Prostate gland (tissue), 2 donors: ENCODE measurements at regions of chr12 and their contacts with region 1.

Region 1: GRCh38 chr12:130761537-130762318 is 45.6 kb upstream of the RIMBP2 start:
- DNase-seq: peak; percentile 40
- H3K4me3 ChIP-seq: no peak overlapping the region
- H3K27ac ChIP-seq: no peak overlapping the region
- H3K4me1 ChIP-seq: no peaks in the 10 kb centered on the region
- H3K27me3 ChIP-seq: no peaks in the 10 kb centered on the region
- CTCF ChIP-seq: peak in 3 of 4 experiments; percentile 51 to 65 (median 58)
- POLR2A ChIP-seq: no peak

Region 2: DNA sequence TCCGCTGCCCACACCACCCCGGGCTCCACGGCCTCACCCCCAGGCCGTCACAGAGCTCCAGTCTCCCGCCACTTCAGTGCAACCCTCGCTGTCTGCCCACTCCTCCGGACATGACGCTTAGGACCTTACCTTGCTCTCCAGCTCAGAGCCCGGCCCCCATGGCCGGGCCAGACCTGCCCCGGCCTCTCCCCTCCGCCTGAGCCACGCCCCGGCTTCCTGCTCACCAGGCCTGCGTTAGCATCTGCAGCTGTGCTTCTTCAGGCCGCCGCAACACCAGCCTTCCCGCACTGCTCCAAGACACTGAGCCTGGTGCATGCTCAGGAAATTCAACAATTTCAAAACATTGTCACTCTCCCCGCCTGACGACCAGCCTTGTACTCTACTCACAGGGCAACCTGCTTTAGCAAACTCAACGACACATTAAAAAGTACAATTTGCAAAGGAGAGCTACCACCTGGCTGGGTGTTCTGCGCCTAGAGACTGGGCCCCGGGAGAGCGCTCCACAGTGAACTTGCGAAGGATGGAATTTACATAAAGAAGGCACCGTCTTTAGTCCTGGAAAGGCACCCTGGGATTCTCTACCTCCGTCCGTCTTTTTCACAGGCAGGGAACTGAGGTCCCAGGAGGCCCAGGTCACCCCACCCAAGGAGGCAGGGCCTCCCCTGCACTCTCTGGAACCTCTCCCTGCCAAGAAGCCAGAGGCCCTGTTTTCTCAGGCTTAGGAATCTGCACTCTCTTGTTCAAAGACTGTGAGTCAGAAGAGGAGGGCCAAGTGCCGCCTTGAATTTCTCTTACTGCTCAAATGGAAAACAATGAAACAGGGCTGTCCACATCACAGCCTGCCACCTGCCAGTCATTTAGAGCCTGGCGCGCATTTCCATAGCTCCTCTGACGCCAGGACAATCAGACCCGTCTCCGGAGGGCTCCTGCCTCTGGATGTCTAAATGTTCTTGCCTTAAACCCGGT is 26.0 kb after region 1 on chr12:
- intact Hi-C with region 1: no loop called
- DNase-seq: no peak
- H3K4me3 ChIP-seq: no peak overlapping the region
- H3K27ac ChIP-seq: no peak overlapping the region
- H3K4me1 ChIP-seq: no peaks in the 10 kb centered on the region
- H3K27me3 ChIP-seq: no peaks in the 10 kb centered on the region
- CTCF ChIP-seq: no peak
- POLR2A ChIP-seq: no peak

Region 3: DNA sequence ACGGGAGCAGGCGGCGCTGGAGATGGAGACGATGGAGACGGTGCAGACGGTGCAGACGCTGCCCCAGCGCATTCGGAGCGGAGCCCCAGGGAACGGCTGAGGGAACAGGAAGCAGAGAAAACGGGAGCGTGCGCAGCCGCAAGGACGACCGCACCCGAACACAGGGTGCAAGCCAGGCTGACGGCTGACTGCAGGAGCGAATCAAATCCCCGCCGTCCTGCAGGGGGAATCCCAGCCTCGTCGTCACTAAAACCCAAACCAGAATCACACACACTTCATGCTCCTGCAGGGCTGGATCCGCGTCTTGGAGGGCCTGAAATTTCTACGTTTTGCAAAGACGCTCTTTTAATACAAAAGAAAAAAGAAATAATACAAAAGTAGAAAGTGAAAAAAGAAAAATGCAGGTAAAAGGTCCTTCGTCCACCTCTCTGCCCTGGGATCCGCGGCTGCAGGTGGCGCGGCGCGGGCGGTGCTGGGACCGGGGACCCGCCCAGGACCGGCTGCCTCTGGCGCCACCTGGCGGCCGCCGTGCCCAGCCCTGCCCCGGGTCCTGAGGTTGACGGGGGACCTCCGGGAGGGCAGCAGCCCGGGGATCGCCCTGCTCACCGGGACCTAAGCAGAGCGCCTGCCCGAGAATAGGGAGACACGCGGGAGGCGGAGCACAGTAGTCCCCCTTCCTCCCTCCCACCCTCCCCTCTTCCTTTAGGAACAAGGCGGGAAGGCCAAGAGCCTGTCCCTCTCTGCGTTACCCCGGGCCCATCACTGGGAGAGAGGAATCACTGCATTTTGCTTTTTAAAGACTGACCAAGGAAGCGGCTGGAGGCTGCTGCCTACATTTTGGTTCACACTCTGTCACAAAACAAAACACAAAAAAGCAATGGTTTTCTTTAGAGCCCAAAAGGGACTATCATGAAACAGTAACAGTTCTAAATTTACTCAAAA is 57.2 kb after region 1 on chr12:
- intact Hi-C with region 1: loop called (anchors 5 kb)
- DNase-seq: peak; percentile 52
- H3K4me3 ChIP-seq: peak overlapping the region; percentile 28 to 30
- H3K27ac ChIP-seq: no peak overlapping the region
- H3K4me1 ChIP-seq: no peaks in the 10 kb centered on the region
- H3K27me3 ChIP-seq: no peaks in the 10 kb centered on the region
- CTCF ChIP-seq: peak; percentile 80 to 94 (median 83)
- POLR2A ChIP-seq: no peak